ENCODE measurements at regions of chr5 and their contacts with region 1.

Region 1: DNA sequence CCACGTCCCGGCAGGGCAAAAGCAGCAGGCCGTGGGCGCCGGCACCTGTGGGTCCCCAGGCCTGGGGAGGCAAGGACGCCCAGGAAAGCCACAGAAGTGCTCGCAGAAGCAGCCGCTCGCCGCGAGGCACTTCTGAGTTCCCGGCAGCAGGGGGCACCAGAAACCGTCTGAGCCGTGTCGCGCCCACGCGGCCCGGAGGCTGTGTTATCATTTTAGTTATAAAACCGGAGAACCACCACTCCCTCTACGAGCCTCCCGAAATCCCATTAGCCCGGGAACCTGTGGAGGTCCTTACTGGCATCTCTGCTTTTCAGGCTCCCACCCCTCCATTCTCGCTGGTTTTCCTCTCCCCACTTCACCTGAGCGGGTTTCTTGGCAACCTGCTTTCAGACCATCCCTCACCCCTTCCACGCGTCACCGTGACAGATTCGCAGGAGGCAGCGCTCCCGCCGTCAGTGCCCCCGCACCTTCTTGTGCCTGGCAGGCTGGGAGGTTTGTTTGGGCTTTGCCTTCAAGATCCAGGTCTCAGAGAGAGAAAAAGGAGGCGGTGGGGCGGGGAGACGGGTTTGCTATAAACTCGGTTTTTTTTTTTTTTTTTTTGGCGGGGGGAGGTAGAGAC is 2.3 kb downstream of the GDNF start:
- DNase-seq: peak; percentile 61 to 92
- H3K4me3 ChIP-seq: peak overlapping the region; percentile 48 to 53 (median 51)
- H3K27ac ChIP-seq: peak overlapping the region; percentile 28 to 87 (median 76)
- H3K4me1 ChIP-seq: peaks cover 40 to 70% (median 55%) of the 10 kb centered on the region in 4 donors
- H3K27me3 ChIP-seq: peaks cover 8 to 100% (median 80%) of the 10 kb centered on the region in 3 donors
- CTCF ChIP-seq: peak in 5 of 7 experiments; percentile 45 to 70 (median 59)
- EP300 ChIP-seq: no peak
- POLR2A ChIP-seq: no peak

Region 2: DNA sequence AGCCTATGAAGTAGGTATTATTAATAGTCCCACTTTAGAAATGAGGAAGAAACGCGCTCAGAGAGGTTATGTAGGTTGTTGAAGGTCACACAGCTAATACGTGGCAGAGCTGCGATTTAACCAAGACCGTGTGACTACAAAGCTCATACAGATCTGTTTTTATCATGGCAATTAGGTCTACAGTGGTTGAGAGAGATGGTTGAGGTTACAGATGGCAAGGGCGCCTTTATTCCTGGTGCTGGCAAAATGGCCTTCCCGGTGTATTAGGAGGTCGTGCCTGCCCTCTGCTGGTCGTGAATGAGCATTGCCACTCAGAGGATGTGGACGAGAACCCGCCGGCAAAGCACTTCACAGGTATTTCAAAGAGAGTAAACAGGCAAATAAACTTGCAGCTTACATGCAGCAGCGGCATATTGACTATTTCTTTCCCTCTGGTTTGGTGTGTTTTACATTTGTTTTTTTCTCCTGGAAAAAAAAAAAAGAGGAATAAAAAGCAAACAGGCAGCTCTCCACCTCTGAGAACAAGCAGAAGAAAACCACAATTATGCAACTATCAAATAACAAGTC is 355.6 kb after region 1 on chr5:
- intact Hi-C with region 1: loop called (anchors 5 kb)
- DNase-seq: peak; percentile 75 to 89
- H3K4me3 ChIP-seq: no peak overlapping the region
- H3K27ac ChIP-seq: no peak overlapping the region
- H3K4me1 ChIP-seq: peaks cover 0 to 6% (median 0%) of the 10 kb centered on the region in 4 donors
- H3K27me3 ChIP-seq: peaks cover 0 to 35% (median 6%) of the 10 kb centered on the region in 3 donors
- CTCF ChIP-seq: peak in 6 of 7 experiments; percentile 44 to 90 (median 84)
- EP300 ChIP-seq: no peak
- POLR2A ChIP-seq: no peak

Region 3: DNA sequence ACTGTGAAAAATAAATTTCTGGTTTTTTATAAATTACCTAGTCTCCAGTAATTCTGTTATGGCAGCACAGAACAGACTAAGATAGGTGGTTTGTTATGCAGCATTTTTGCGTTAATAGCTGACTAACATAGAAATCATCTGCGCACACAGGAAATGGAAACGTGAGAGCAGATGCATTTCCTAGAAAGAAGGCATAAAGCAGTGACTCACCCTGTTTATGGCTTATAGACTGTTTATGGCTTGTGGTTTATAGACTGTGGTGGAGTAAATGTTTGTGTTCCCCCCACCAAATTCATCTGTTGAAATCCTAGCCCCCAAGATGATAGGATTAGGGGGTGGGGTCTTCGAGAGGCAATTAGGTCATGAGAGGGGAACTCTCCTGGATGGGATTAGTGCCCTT is 990.0 kb after region 1 on chr5:
- intact Hi-C with region 1: no loop called
- DNase-seq: no peak
- H3K4me3 ChIP-seq: no peak overlapping the region
- H3K27ac ChIP-seq: no peak overlapping the region
- H3K4me1 ChIP-seq: peaks cover 0 to 5% (median 0%) of the 10 kb centered on the region in 4 donors
- H3K27me3 ChIP-seq: no peaks in the 10 kb centered on the region
- CTCF ChIP-seq: no peak
- EP300 ChIP-seq: no peak
- POLR2A ChIP-seq: no peak